Activated CD8-positive, alpha-beta T cell treated with anti-CD3 and anti-CD28 coated beads for 36 hours (primary cell): ENCODE measurements at regions of chr13 and their contacts with region 1.

Region 1: DNA sequence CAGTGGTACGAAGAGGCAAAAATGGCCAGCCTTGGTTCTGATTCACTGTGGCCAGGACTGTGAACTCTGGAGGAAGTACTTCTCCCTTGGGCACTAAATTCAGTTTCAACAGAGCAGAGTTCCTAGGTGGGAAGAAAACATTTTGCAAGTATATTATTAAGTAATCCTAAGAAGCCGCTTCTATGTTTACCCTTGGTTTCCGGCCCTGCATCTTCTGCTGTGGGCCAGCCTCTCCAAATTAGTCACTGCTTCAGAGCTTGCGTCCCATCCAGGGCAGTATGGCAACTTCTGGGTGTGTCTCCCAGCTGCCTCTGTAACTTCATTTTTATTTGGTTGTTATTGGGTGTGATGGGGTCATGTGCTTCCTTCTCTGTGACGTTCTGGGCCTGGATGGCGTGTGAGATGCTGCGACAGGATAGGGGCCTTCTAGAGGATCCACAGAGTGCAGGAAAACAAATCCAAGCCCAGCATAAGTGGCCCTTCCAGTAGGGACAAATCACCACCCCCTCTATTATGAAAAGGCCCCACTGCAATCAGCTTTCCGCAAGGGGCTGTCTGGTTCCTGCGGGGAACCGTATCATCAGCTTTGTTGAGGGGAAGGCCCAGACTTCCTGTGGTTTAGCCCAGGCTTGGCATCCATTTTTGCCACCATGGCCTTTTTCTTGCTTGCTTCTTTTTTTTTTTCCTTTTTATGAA is 55.1 kb upstream of the C1QTNF9 start:
- DNase-seq: peak; percentile 81
- ATAC-seq: peak; percentile 68
- H3K4me3 Mint-ChIP-seq: peak overlapping the region; percentile 82
- H3K27ac Mint-ChIP-seq: peak overlapping the region; percentile 90
- H3K4me1 Mint-ChIP-seq: peaks cover 77% of the 10 kb centered on the region
- H3K27me3 Mint-ChIP-seq: no peaks in the 10 kb centered on the region
- CTCF ChIP-seq: no peak

Region 2: DNA sequence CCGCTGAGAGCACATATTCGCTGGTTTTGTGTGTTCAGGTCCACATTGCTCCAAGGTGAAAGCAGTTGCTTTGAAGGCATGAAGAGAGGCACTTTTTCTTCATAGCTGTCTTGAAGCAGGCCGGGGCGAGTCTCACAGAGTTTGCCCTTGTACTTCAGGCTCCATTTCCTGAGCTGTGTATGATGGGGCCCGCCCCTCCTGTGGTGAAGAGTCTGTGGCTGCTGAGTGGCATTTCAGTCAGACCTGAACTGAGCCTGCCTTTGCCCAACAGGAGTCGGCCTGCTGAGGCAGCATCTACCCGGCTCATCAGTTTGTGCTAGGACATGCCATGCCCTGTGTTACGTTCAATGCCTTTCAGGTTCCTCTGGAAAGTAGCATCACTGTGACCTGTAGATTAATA is 10.7 kb after region 1 on chr13:
- CTCF ChIA-PET with region 1: interaction called, 11 read pairs
- POLR2A ChIA-PET with region 1: interaction called, 227 read pairs
- intact Hi-C with region 1: loop called (anchors 2 kb)
- DNase-seq: peak; percentile 95
- ATAC-seq: peak; percentile 93
- H3K4me3 Mint-ChIP-seq: peak overlapping the region; percentile 70
- H3K27ac Mint-ChIP-seq: peak overlapping the region; percentile 96
- H3K4me1 Mint-ChIP-seq: peaks cover 90% of the 10 kb centered on the region
- H3K27me3 Mint-ChIP-seq: no peaks in the 10 kb centered on the region
- CTCF ChIP-seq: no peak

Region 3: GRCh38 chr13:24270639-24271141 is 16.4 kb after region 1 on chr13:
- CTCF ChIA-PET with region 1: interaction called, 7 read pairs
- POLR2A ChIA-PET with region 1: interaction called, 227 read pairs
- intact Hi-C with region 1: loop called (anchors 2 kb)
- DNase-seq: peak; percentile 72
- ATAC-seq: peak; percentile 34
- H3K4me3 Mint-ChIP-seq: peak overlapping the region; percentile 87
- H3K27ac Mint-ChIP-seq: peak overlapping the region; percentile 98
- H3K4me1 Mint-ChIP-seq: peaks cover 83% of the 10 kb centered on the region
- H3K27me3 Mint-ChIP-seq: no peaks in the 10 kb centered on the region
- CTCF ChIP-seq: no peak